Ovary (tissue), 10 donors: ENCODE measurements at regions of chr1 and their contacts with region 1.

Region 1: DNA sequence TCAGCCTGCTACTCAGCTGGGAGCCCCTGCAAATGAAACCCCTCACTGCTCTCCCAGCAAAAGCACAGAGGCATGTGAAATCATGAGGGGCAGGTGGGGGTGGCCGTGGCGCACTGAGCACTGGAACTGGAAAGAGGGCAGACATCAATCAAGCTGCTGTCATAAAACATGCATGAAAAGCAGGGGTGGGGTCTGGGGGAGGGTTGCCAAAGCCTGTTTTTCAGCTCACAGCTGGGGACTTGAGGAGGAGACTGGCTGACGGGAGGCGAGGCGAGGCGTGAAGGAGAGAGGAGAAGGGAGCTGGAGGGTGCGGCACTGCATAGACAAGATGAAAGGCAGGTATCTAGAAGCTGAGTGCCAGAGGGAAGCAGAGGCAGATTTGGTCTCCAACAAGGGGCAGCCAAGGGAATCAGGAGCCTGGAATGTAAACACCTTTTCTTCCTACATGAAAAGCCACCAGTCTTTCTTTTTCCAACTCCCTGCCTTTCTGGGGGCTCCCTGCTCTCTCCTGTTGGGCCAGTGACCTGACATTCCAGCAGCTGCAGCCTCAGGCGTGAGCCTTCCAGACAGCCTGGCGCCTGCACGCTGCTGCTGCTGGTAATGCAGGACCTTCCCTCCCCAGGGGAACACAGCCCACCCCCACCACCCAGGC is 87.0 kb downstream of the NMNAT2 start:
- DNase-seq: no peak
- H3K4me3 ChIP-seq: no peak overlapping the region
- H3K27ac ChIP-seq: no peak overlapping the region
- H3K4me1 ChIP-seq: peaks cover 3% of the 10 kb centered on the region
- H3K27me3 ChIP-seq: no peaks in the 10 kb centered on the region
- CTCF ChIP-seq: no peak
- EP300 ChIP-seq: no peak
- POLR2A ChIP-seq: no peak

Region 2: GRCh38 chr1:182955596-182956588 is 375.3 kb before region 1 on chr1:
- intact Hi-C with region 1: loop called in 1 of 4 experiments (anchors 10 kb)
- DNase-seq: no peak
- H3K4me3 ChIP-seq: no peak overlapping the region
- H3K27ac ChIP-seq: no peak overlapping the region
- H3K4me1 ChIP-seq: peaks cover 4% of the 10 kb centered on the region
- H3K27me3 ChIP-seq: no peaks in the 10 kb centered on the region
- CTCF ChIP-seq: no peak
- EP300 ChIP-seq: no peak
- POLR2A ChIP-seq: no peak

Region 3: GRCh38 chr1:183404456-183404855 is 73.2 kb after region 1 on chr1:
- intact Hi-C with region 1: no loop called
- DNase-seq: no peak
- H3K4me3 ChIP-seq: no peak overlapping the region
- H3K27ac ChIP-seq: no peak overlapping the region
- H3K4me1 ChIP-seq: no peaks in the 10 kb centered on the region
- H3K27me3 ChIP-seq: no peaks in the 10 kb centered on the region
- CTCF ChIP-seq: no peak
- EP300 ChIP-seq: no peak
- POLR2A ChIP-seq: no peak

Region 4: GRCh38 chr1:184146203-184146602 is 815.0 kb after region 1 on chr1:
- intact Hi-C with region 1: loop called in 1 of 4 experiments (anchors 5 kb)
- DNase-seq: no peak
- H3K4me3 ChIP-seq: no peak overlapping the region
- H3K27ac ChIP-seq: no peak overlapping the region
- H3K4me1 ChIP-seq: peaks cover 4% of the 10 kb centered on the region
- H3K27me3 ChIP-seq: no peaks in the 10 kb centered on the region
- CTCF ChIP-seq: no peak
- EP300 ChIP-seq: no peak
- POLR2A ChIP-seq: no peak